ENCODE measurements at regions of chr2 and their contacts with region 1.

Region 1: GRCh38 chr2:42095923-42096408 is 48.1 kb downstream of the PKDCC start:
- DNase-seq: peak in 34 of 35 experiments; percentile 49 to 90 (median 74)
- ATAC-seq: peak; percentile 56 to 63 (median 58)
- H3K4me3 ChIP-seq: no peak overlapping the region
- H3K4me3 Mint-ChIP-seq: no peak overlapping the region
- H3K27ac ChIP-seq: no peak overlapping the region
- H3K27ac Mint-ChIP-seq: peak overlapping the region in 1 of 2 donors; percentile 41
- H3K4me1 ChIP-seq: peaks cover 22 to 51% of the 10 kb centered on the region in 2 experiments
- H3K4me1 Mint-ChIP-seq: peaks cover 42 to 58% (median 51%) of the 10 kb centered on the region in 3 donors
- H3K27me3 ChIP-seq: no peaks in the 10 kb centered on the region
- H3K27me3 Mint-ChIP-seq: no peaks in the 10 kb centered on the region

Region 2: DNA sequence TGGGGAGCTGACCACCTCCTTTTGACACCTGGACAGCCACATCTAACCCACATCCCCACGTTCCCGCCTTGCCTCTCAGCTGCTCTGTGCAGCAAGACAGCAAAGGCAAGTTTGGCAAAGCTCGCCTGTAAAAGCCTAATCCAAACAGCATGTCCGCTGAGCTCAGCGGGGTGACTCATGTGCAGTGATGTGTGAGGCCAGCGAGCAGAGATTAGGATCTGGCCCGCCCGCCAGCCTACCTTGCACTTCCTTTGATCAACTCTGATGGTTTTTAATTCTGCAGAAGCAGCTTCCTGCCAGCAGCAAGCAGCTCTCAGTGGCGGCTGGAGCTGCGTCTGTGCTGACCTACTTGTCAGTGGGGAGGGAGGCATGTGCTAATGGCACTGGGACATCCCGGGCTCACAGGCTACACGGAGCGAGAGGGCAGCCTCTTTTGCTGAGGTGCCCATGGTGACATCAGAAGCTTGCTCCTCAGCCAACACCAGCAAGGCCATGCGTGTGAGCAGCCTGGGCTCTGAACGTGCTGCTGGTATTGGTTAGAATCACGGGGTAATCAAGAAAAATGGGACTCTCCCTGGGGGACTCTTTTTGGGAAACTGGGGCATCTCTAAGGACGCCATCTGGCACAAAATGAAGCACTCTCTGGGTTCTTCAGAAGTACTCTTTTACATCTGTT is 37.1 kb after region 1 on chr2:
- CTCF ChIA-PET with region 1: interaction called, 4 to 25 read pairs
- POLR2A ChIA-PET with region 1: interaction called, 3 to 4 read pairs
- DNase-seq: peak; percentile 74 to 95 (median 89)
- ATAC-seq: peak; percentile 88 to 92 (median 90)
- H3K4me3 ChIP-seq: peak overlapping the region; percentile 38 to 42
- H3K4me3 Mint-ChIP-seq: peak overlapping the region; percentile 66 to 74 (median 71)
- H3K27ac ChIP-seq: peak overlapping the region; percentile 99
- H3K27ac Mint-ChIP-seq: peak overlapping the region; percentile 99
- H3K4me1 ChIP-seq: peaks cover 72 to 91% of the 10 kb centered on the region in 2 experiments
- H3K4me1 Mint-ChIP-seq: peaks cover 90 to 98% (median 94%) of the 10 kb centered on the region in 3 donors
- H3K27me3 ChIP-seq: no peaks in the 10 kb centered on the region
- H3K27me3 Mint-ChIP-seq: no peaks in the 10 kb centered on the region

Region 3: DNA sequence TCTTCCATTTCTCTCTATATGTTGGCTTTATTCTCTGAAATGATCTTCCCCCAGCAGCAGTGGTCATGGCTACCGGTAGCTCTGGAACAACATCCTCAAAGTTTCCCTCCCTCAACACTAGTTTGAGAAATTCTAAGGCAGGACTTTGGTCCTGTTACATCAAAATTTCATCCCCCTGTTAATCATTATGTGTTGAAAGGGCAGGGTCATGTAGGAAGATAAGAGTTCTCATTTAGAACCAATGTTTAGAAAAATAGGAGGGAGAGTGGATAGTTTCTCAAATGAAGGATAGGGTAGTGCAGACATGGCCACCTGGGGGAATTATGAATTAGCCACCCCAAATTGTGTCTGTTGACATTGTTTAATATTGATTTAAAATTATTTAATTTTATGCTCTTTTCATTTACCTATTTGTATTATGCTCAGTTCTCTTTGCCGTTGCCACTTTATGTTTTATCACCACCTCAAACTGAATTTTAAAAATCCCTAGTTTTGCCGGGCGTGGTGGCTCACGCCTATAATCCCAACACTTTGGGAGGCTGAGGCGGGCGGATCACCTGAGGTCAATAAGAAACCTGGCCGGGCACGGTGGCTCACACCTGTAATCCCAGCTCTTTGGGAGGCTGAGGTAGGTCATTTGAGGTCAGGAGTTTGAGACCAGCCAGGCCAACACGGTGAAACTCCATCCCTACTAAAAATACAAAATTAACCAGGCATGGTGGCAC is 95.5 kb after region 1 on chr2:
- CTCF ChIA-PET with region 1: interaction called, 5 to 32 read pairs
- POLR2A ChIA-PET with region 1: interaction called in 1 of 2 experiments, 3 read pairs
- DNase-seq: no peak
- ATAC-seq: no peak
- H3K4me3 ChIP-seq: no peak overlapping the region
- H3K4me3 Mint-ChIP-seq: peak overlapping the region; percentile 11 to 36 (median 24)
- H3K27ac ChIP-seq: no peak overlapping the region
- H3K27ac Mint-ChIP-seq: peak overlapping the region; percentile 90
- H3K4me1 ChIP-seq: peaks cover 13 to 37% of the 10 kb centered on the region in 2 experiments
- H3K4me1 Mint-ChIP-seq: peaks cover 74 to 89% (median 84%) of the 10 kb centered on the region in 3 donors
- H3K27me3 ChIP-seq: no peaks in the 10 kb centered on the region
- H3K27me3 Mint-ChIP-seq: no peaks in the 10 kb centered on the region

Region 4: DNA sequence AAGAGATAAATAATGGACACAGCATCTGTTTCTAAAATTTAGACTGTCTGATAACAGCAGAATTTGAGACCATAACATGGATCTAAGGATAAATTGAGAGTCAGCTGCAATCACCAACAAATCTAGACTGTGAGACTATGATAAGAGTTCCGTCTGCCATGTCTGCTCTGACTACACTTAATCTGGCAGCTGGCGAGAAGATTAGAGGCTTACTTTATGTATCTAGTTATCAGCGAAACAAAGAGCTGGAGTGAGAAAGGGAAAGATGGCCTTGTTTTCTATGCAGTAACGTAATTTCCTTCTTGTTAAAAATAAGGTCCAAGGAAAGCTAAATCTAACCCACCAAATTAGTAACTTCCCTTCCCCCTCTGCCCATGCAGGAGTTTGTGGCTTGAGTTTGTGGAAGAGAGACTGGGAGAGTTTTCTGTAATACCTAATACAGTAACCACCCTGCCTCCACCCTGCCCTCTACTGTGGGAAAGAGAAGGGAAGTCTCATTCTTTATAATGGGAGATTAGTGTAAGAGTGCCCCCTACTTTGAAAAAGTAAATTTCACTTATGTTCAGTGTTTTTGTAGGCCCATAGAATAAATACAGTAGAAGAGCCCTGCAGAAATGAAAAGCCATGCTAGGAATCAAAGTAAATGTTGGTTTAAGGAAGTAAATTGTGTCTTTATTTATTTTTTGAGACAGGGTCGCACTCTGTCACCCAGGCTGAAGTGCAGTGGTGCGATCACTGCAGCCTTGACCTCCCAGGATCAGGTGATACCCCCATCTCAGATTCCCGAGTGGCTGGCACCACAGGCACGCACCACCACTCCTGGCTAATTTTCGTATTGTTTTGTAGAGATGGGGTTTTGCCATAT is 100.7 kb after region 1 on chr2:
- CTCF ChIA-PET with region 1: interaction called, 5 to 32 read pairs
- POLR2A ChIA-PET with region 1: interaction called in 1 of 2 experiments, 3 read pairs
- DNase-seq: peak in 34 of 35 experiments; percentile 4 to 72 (median 36)
- ATAC-seq: peak; percentile 78 to 83 (median 82)
- H3K4me3 ChIP-seq: no peak overlapping the region
- H3K4me3 Mint-ChIP-seq: peak overlapping the region in 1 of 3 donors; percentile 41
- H3K27ac ChIP-seq: peak overlapping the region; percentile 1
- H3K27ac Mint-ChIP-seq: peak overlapping the region; percentile 35 to 65
- H3K4me1 ChIP-seq: peaks cover 24 to 40% of the 10 kb centered on the region in 2 experiments
- H3K4me1 Mint-ChIP-seq: peaks cover 85 to 87% (median 86%) of the 10 kb centered on the region in 3 donors
- H3K27me3 ChIP-seq: no peaks in the 10 kb centered on the region
- H3K27me3 Mint-ChIP-seq: no peaks in the 10 kb centered on the region

Region 5: DNA sequence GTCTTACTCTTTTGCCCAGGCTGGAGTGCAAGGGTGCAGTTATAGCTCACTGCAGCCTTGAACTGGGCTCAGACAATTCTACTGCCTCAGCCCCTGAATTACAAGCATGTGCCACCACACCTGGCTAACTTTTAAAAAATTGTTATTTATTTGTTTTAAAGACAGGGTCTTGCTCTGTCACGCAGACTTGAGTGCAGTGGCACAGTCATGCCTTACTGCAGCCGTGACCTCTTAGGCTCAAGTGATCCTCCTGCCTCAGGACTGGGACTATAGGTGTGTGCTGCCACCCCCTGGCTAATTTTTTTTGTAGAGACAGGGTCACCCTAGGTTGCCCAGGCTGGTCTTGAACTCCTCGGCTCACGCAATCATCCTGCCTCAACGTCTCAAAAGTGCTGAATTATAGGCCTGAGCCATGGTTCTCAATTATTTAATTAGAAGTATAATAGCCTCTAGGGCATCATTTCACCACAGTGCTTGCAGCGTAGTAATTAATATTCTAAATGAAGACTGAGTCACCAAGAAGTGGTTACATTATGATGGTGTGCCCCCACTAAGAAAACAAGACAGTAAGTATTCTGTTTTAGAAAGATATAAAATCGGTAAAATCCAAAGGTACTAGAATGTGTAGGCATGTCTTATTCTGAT is 142.8 kb after region 1 on chr2:
- CTCF ChIA-PET with region 1: interaction called, 8 to 16 read pairs
- POLR2A ChIA-PET with region 1: interaction called in 1 of 2 experiments, 6 read pairs
- DNase-seq: peak in 31 of 35 experiments; percentile 5 to 57 (median 28)
- ATAC-seq: peak; percentile 64 to 83 (median 74)
- H3K4me3 ChIP-seq: no peak overlapping the region
- H3K4me3 Mint-ChIP-seq: peak overlapping the region in 1 of 3 donors; percentile 21
- H3K27ac ChIP-seq: no peak overlapping the region
- H3K27ac Mint-ChIP-seq: peak overlapping the region; percentile 52 to 66
- H3K4me1 ChIP-seq: peaks cover 2 to 25% of the 10 kb centered on the region in 2 experiments
- H3K4me1 Mint-ChIP-seq: peaks cover 92 to 94% (median 94%) of the 10 kb centered on the region in 3 donors
- H3K27me3 ChIP-seq: no peaks in the 10 kb centered on the region
- H3K27me3 Mint-ChIP-seq: no peaks in the 10 kb centered on the region

Region 6: DNA sequence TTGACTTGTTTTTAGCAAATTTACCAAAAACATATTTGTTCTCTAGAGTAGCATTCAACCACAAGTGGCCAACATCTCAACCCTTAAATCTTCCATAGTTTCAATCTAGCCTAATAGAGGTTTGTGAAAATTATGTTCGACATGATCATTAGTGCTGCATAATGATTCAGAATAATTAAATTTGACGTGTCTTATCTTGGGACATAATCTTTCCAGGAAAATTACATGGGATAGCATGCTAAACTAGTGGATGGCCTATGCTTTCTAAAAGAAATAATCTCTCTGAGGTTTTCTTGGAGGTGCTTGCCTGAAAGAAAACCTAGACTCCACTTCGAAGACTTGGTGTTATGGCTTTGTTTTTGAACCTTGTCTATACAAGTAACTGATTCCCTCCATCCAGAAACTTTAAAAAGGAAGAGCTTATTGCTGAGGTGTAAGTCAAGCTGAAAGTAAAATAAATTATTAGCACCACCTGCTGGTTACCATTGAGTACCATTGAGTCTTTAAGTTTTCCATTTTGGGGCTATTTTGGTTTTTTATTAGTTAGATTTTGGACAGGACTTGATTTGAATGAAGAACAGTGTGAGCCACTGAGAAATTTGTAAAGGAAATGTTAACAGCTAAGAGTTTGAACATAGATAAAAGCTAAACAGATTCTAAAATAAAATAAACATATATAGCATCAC is 232.3 kb after region 1 on chr2:
- CTCF ChIA-PET with region 1: interaction called, 5 to 32 read pairs
- POLR2A ChIA-PET with region 1: no interaction called
- DNase-seq: peak in 1 of 35 experiments; percentile 51
- ATAC-seq: peak in 2 of 4 experiments; percentile 40 to 42
- H3K4me3 ChIP-seq: no peak overlapping the region
- H3K4me3 Mint-ChIP-seq: no peak overlapping the region
- H3K27ac ChIP-seq: peak overlapping the region; percentile 9
- H3K27ac Mint-ChIP-seq: peak overlapping the region; percentile 51 to 79
- H3K4me1 ChIP-seq: no peaks in the 10 kb centered on the region
- H3K4me1 Mint-ChIP-seq: peaks cover 2 to 6% (median 5%) of the 10 kb centered on the region in 3 donors
- H3K27me3 ChIP-seq: no peaks in the 10 kb centered on the region
- H3K27me3 Mint-ChIP-seq: no peaks in the 10 kb centered on the region

Measured in T-cell (primary cell).